ENCODE measurements at regions of chr19 and their contacts with region 1.

Region 1: DNA sequence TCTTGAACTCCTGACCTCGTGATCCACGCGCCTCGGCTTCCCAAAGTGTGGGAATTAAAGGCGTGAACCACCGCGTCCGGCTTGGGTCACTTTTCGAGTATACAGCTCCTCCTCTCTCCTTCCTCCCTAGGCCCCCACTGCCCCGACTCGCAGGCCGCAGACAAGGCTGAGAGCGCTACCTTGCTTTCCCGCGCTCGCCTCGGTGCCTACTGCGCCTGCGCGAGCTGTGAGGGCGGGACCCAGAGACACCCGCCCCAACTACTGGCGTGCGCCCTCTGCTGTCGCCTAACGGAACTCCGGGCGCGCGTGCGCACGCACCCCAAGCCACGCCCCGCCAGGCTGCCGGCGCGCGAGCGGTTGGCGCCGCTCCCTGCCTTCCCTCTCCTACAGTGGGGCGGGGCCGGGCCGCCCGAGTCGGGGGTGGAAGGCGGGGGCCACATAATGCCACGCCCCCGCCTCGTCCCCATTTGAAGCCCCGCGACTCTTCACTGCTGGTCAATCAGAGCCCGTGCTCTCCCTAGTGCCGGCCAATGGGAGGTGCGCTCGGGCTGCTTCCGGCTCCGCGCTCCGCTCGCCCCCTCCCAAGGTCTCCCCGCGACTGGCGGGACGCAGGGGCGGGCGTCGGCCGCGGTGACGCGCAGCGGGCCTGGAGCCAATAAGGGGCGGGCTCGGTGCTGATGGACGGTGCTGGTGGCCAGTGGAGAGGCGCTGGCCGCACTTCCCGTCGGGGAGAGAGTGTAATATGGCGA is at the start of gene RAB8A:
- DNase-seq: peak; percentile 97 to 100 (median 99)

Region 2: GRCh38 chr19:16041299-16041990 is 69.9 kb before region 1 on chr19:
- intact Hi-C with region 1: loop called (anchors 1 kb)
- DNase-seq: peak; percentile 59 to 97 (median 86)

Region 3: GRCh38 chr19:16076154-16076957 is 35.0 kb before region 1 on chr19 and contains the start of gene TPM4:
- intact Hi-C with region 1: loop called (anchors 2 kb)
- DNase-seq: peak; percentile 76 to 98 (median 85)